Panc1 (cell line): ENCODE measurements at regions of chr20 and their contacts with region 1.

Region 1: DNA sequence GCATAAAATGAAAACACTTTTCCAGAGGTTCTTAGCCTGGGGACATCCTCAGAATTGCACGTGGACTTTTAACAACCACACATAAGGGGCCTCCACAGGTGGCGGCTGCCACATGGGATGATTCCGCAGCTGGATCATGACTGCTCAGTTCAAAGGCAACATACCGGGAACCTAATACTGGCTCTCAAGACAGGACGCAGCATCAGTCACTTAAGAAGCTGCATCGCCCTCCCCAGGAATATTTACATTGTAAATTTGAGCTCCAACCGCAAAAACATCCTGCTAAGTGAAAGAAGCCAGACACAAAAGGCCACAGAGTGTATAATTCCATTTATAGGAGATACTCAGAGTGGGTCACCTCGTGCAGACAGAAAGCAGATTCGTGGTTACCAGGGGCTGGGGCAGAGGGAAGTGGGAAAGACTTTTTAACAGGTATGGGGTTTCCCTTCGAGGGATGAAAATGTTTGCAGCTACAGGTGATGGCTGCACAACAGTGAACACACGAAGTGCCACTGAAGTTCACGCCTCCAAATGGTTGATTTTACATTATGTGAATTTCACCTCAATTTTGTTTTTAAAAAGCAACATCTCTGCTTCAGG is 141.5 kb downstream of the BMP7 start:
- DNase-seq: no peak
- ATAC-seq: no peak
- H3K4me3 ChIP-seq: no peak overlapping the region
- H3K27ac ChIP-seq: no peak overlapping the region
- H3K4me1 ChIP-seq: no peaks in the 10 kb centered on the region
- H3K27me3 ChIP-seq: no peaks in the 10 kb centered on the region
- CTCF ChIP-seq: no peak

Region 2: DNA sequence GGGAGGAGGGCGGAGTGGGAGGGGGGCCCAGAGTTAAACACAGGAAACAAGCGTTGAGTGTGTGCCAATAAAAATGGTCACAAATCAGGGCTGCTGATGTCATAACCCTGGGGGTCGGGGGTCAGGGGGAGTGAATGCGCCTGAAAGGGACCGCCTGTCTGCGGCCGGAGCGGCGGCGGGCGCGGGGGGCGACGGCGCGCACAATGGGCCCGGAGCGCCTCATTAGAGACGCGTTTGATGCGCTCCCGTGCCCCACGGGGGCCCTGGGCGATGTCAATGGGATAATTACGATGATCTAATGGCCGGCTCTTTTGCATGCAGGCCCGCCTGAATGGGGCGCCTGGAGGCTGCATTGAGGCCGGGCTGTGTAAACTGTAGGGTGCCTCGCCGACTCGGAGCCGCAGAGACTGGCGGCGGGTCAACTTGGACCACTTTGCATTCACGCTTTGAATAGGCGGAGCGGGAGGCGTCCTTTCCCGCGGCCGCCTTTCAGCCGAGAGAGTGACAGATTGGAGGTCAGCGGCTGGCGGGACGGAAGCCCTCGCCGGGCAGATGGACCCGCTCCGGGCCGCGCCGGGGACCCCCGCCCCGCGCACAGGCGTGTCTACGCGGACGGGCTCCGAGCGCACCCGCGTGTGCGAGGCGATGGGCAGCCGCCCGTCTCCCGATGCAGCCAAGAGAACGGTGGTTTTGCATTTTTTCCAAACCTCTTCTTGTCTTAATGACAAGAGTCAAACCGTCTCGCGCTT is 199.6 kb before region 1 on chr20:
- CTCF ChIA-PET with region 1: no interaction called
- POLR2A ChIA-PET with region 1: no interaction called
- in situ Hi-C with region 1: no loop called
- intact Hi-C with region 1: no loop called
- DNase-seq: no peak
- ATAC-seq: no peak
- H3K4me3 ChIP-seq: no peak overlapping the region
- H3K27ac ChIP-seq: no peak overlapping the region
- H3K4me1 ChIP-seq: no peaks in the 10 kb centered on the region
- H3K27me3 ChIP-seq: peaks cover 5% of the 10 kb centered on the region
- CTCF ChIP-seq: no peak

Region 3: GRCh38 chr20:57282670-57283361 is 157.9 kb after region 1 on chr20:
- CTCF ChIA-PET with region 1: interaction called, 11 read pairs
- POLR2A ChIA-PET with region 1: no interaction called
- in situ Hi-C with region 1: no loop called
- intact Hi-C with region 1: no loop called
- DNase-seq: no peak
- ATAC-seq: no peak
- H3K4me3 ChIP-seq: no peak overlapping the region
- H3K27ac ChIP-seq: no peak overlapping the region
- H3K4me1 ChIP-seq: no peaks in the 10 kb centered on the region
- H3K27me3 ChIP-seq: peaks cover 5% of the 10 kb centered on the region
- CTCF ChIP-seq: no peak